Endothelial cell of umbilical vein (primary cell): ENCODE measurements at regions of chrX and their contacts with region 1.

Region 1: DNA sequence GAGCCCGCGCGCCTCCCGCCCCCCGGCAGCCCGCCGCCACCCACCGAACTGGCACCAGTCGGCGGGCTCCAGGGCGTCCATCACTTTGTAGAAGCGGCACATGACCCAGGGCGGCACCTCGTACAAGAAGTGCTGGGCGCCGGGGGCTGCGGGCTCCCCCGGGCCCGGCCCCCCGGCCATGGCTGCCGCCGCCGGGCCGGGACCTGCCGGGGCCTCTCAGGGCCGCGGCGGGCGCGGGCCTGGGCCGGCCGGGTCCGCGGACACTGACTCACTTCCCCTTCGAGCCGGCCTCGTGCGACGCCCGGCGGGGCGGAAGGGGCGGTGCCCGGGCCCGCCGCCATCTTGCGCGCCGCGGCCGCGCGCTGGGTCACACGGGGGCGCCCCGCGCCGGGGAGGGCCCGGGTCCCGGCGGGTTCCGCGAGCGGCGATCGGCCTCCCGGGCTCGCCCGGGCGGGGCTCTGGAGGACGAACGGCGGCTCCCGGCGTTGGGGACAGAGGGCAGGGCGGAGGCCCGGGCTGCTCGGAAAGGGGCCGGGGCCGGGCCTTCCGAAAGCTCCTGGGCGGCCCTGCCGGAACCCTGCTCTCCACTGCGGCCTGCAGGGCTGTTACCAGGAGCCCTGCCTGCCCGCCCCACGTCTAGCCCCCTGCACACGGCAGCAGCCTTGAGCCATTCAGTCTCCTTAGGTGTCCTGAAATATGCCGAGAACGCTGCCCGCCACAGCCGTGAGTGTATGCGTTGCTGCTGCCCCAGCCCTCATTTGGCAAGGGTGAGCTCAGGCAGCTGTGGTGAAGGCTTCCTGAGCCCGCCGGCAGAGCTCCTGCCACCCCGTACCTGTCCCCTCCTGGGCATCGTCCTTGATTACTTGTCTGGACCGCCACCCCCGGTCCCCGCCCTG is at the start of gene IRAK1:
- DNase-seq: peak; percentile 37
- H3K4me3 ChIP-seq: peak within 1 kb of the TSS; percentile 44 to 69 (median 59)
- H3K27ac ChIP-seq: peak within 1 kb of the TSS; percentile 90
- H3K4me1 ChIP-seq: peaks cover 25% of the 10 kb centered on the region
- H3K27me3 ChIP-seq: no peaks in the 10 kb centered on the region
- CTCF ChIP-seq: no peak
- POLR2A ChIP-seq: no peak
- total RNA-seq, gene IRAK1: 136 and 138 TPM in 2 replicates

Region 2: DNA sequence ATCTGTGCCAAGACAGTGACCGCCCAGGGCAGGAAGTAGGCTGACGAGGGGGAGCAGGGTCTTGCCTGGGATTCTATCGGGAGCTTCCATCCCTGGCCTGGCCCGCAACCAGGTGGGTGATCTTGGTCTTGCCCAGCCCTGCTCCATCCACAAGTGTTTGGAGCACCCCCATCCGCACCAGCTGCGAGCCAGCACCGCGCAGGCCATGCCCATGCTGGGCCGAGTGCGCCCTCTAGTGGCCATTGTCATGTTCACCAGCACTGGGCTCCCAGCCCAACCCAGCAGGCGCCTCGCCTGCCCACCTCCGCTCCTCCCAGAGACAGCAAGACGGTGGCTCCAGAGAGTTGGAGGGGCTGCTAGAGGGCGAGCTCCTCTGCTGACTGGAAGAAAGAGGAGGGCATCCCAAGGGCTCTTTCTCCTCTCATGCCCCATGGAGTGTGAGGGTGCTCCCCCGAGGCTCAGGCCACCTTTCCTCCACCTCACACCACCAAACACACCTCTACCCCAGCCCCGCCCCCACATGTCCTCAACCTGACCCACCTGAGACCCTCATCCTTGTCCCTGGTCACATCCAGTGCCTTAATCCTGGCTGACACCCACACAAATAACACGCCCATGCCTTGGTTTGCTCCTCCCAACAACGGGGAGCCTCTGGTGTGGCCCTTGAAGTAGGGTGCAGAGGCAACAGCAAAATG is 512.2 kb before region 1 on chrX:
- CTCF ChIA-PET with region 1: no interaction called
- POLR2A ChIA-PET with region 1: no interaction called
- dilution Hi-C with region 1: no loop called
- intact Hi-C with region 1: no loop called
- DNase-seq: peak; percentile 68
- H3K4me3 ChIP-seq: no peak overlapping the region
- H3K27ac ChIP-seq: no peak overlapping the region
- H3K4me1 ChIP-seq: no peaks in the 10 kb centered on the region
- H3K27me3 ChIP-seq: no peaks in the 10 kb centered on the region
- CTCF ChIP-seq: peak; percentile 65 to 80
- POLR2A ChIP-seq: no peak

Region 3: GRCh38 chrX:154046031-154046781 is 26.3 kb after region 1 on chrX:
- CTCF ChIA-PET with region 1: interaction called, 14 read pairs
- POLR2A ChIA-PET with region 1: no interaction called
- dilution Hi-C with region 1: no loop called
- intact Hi-C with region 1: no loop called
- DNase-seq: peak; percentile 93
- H3K4me3 ChIP-seq: no peak overlapping the region
- H3K27ac ChIP-seq: peak overlapping the region; percentile 87
- H3K4me1 ChIP-seq: peaks cover 32% of the 10 kb centered on the region
- H3K27me3 ChIP-seq: no peaks in the 10 kb centered on the region
- CTCF ChIP-seq: peak in 1 of 2 donors; percentile 15
- POLR2A ChIP-seq: no peak